Activated naive CD4-positive, alpha-beta T cell treated with anti-CD3 and anti-CD28 coated beads for 36 hours (primary cell): ENCODE measurements at regions of chr4 and their contacts with region 1.

Region 1: DNA sequence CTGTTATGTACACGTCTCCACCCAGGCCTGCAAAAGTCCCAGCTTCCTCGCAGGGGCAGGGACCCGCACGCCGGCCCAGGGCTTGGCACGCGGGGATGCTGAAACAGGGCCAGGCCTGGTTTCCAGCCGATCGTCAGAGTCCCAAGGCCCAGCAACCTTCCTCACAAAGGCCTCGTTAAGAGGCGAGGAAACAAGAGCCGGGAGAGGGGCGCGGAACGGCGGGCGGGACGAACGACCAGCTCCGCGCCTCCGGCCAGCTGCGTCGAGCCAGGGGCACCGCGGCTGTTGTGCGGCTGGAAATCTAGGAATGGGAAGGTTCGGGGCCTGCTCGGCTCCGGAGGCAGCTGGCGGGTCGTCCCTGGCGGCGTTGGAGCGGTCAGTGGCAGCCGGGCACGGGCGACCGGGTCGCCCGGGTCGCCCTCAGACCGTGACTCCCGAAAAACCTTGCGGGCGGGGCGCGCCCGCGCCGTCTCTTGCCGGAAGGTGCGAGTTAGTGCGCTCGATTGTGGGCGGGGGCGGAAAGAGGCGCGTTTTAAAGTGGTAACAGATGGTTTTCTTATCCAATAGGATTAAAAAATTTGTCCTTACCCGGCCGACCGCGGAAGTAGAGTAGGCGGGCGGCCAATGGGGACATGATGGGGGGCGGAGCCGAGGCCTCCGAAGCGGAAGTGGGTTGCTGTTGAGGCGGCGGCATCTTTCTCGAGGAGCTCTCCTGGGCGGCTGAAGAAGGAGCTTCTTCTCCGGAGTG is at the start of gene RNF4:
- DNase-seq: peak; percentile 98
- H3K4me3 Mint-ChIP-seq: peak within 1 kb of the TSS; percentile 97
- H3K27ac Mint-ChIP-seq: peak within 1 kb of the TSS; percentile 98
- H3K4me1 Mint-ChIP-seq: peaks cover 47% of the 10 kb centered on the region
- H3K27me3 Mint-ChIP-seq: no peaks in the 10 kb centered on the region
- total RNA-seq, gene RNF4: 69.2 to 73.1 TPM

Region 2: DNA sequence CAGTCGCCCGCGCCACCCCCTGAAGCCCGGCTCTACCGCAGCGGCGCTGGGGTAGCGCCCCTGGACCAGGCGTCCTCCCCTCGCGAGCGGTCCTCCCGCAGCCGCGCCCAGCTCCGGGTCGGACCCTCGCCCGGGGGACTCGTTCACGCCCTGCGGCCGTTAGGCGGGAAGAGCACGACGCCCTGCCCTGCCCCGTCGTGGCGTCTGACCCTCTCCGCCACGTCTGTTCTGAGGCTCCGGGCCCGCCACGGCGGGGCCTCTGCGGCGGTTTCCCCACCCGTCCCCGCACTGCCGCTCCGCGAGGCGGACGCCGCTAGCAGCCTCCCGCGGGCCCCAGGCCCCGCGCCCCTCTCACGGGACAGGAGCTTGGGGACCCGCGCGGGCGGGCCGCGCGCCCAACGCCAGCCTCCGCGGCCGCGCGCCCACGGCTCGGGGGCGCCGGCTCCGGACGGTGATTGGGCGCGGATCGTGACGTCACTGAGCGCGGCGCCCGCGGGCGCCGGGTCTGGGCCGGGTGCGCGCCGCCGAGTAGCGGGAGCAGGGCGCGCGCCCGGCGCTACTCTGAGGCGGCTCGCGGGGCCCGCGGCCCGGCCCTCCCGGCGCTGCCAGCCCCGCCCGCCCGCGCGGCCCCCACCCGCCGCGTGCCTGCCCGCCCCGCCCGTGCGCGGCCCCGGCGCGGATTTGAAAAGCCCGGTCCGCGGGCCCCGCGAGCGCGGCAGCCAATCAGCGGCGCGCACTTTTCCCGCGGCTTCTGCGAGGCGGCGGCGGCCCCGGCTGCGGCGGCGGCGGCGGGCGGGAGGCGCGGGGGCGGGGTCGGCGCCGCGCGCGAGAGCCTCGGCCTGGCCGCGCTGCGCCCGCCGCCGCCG is 597.8 kb before region 1 on chr4 and contains the start of gene NSD2:
- CTCF ChIA-PET with region 1: no interaction called
- intact Hi-C with region 1: loop called (anchors 5 kb)
- DNase-seq: peak; percentile 90
- H3K4me3 Mint-ChIP-seq: peak within 1 kb of the TSS; percentile 92
- H3K27ac Mint-ChIP-seq: peak within 1 kb of the TSS; percentile 96
- H3K4me1 Mint-ChIP-seq: peaks cover 35% of the 10 kb centered on the region
- H3K27me3 Mint-ChIP-seq: no peaks in the 10 kb centered on the region
- total RNA-seq, gene NSD2: 246 to 250 TPM

Region 3: DNA sequence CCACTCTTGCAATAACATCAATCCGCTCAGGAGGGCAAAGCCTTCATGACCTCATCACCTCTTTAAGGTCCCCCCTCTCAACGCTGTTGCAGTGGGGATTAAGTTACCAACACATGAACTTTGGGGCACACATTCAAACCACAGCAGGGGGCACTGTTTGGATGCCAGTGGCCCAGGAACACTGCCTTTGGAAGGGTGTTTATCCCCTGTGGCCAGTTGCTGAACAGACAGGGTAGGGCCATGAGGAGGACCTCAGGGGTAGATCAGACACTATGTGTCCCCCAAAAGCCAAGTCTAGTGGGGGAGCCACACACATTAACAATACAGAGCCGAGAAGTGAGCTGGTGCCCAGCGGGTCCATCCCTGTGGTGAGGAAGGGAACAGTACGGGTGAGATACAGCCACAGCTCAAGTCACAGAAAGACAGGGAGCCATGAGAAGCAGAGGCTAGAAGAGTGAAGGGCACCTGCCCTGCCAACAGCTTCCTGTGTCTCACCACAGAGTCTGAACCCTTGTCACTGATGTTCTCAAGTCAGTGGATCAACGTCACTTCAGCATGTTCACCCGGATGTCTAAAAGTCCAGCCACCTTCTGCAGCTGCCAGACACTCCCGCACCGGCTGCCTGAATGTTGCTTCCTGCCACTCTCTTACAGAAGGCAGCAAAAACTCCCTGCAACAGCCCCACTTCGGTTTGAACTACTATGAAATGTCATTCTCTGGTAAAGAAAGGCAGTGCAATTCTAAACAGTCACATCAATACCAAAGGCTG is 186.9 kb before region 1 on chr4:
- CTCF ChIA-PET with region 1: interaction called, 3 read pairs
- intact Hi-C with region 1: loop called (anchors 2 kb)
- DNase-seq: peak; percentile 94
- H3K4me3 Mint-ChIP-seq: peak overlapping the region; percentile 17
- H3K27ac Mint-ChIP-seq: peak overlapping the region; percentile 98
- H3K4me1 Mint-ChIP-seq: peaks cover 37% of the 10 kb centered on the region
- H3K27me3 Mint-ChIP-seq: no peaks in the 10 kb centered on the region

Region 4: GRCh38 chr4:2418650-2419571 is 49.7 kb before region 1 on chr4 and contains the start of gene CFAP99:
- CTCF ChIA-PET with region 1: no interaction called
- intact Hi-C with region 1: loop called (anchors 1 kb)
- DNase-seq: peak; percentile 97
- H3K4me3 Mint-ChIP-seq: peak within 1 kb of the TSS; percentile 81
- H3K27ac Mint-ChIP-seq: no peak within 1 kb of the TSS
- H3K4me1 Mint-ChIP-seq: peaks cover 38% of the 10 kb centered on the region
- H3K27me3 Mint-ChIP-seq: peaks cover 37% of the 10 kb centered on the region
- total RNA-seq, gene CFAP99: not detected

Region 5: DNA sequence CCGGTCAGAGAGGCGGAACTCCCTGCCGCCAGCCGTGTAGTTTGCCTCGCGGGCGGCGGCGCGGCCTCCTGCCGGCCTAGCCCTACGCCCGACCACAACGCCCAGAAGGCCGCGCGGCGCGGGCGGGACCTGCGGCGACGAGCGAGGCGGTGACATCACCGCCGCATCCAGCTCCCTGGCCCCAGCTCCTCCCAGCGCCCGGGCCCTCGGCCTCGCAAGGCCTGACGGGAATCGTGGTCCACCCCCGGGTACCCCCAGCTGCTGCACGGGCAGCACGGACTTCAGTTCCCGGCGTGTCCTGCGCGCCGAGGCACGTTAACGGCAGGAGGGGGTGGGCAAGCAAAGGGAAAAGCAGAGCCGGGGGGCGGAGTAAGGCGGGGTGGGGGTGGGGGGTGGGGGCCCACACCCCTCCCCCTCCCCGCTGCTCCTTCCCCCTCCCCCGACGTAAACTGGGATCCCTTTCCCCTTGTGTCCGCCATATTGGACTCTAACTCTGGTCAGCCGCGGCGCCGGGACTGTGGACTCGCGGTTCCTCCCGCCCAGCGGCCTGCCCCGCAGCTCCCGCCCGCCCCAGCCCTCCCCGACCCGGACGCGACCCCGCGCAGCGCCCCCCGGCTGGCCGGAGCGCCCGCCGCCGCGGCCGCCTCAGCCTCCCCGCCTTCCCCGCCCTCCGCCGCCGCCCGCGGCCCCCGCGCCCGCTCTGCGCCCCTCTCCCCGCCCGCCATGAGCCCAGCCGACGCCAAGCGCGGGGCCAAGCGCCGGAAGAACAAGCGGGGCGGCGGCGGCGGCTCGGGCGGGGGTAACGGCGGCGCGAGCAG is 67.8 kb after region 1 on chr4 and contains the start of gene FAM193A:
- CTCF ChIA-PET with region 1: no interaction called
- intact Hi-C with region 1: loop called (anchors 1 kb)
- DNase-seq: peak; percentile 99
- H3K4me3 Mint-ChIP-seq: peak within 1 kb of the TSS; percentile 86
- H3K27ac Mint-ChIP-seq: peak within 1 kb of the TSS; percentile 83
- H3K4me1 Mint-ChIP-seq: peaks cover 18% of the 10 kb centered on the region
- H3K27me3 Mint-ChIP-seq: no peaks in the 10 kb centered on the region
- total RNA-seq, gene FAM193A: 20.1 to 20.4 TPM

Region 6: DNA sequence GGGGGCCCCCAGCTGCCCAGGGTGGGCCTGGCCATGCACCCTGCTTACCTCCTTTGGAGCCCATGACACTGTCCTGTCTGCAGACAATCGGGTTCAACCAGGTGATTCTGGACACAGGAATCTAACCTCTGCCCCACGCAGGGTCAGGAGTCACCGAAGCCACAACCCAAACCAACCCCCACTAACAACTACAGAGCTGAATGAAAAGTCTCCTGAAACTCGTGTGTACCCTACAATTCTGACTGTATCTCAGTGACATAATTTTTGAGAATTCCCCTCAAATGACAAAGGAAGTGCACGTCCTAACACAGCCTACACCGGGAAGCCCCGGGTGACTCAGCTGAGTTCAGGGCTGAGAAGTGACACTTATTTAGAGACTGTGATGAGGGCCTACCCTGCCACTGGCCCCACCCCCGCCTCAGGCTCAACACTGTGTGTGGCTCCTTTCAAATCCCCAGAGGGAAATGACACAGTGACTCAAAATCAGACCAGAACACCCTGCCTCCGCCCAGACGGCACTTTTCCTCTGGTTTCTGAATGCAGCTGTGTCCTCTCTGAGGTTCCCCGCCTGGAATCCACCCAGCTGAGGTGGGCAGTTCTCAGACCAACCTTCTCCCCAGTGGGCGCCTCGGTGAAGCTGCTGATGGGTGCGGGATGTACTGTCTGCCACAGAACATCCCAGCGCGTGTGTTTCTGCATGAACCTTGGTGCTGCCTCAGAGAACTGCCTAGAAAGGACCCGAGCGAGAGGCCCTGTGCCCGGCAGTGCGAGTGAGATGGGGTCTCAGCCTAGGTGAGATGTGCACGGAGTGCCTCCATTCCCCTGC is 277.6 kb after region 1 on chr4:
- CTCF ChIA-PET with region 1: interaction called, 8 read pairs
- intact Hi-C with region 1: loop called (anchors 1 kb)
- DNase-seq: peak; percentile 99
- H3K4me3 Mint-ChIP-seq: peak overlapping the region; percentile 27
- H3K27ac Mint-ChIP-seq: peak overlapping the region; percentile 90
- H3K4me1 Mint-ChIP-seq: peaks cover 64% of the 10 kb centered on the region
- H3K27me3 Mint-ChIP-seq: no peaks in the 10 kb centered on the region

Region 7: GRCh38 chr4:3037957-3038461 is 569.4 kb after region 1 on chr4:
- CTCF ChIA-PET with region 1: no interaction called
- intact Hi-C with region 1: loop called (anchors 5 kb)
- DNase-seq: peak; percentile 45
- H3K4me3 Mint-ChIP-seq: peak overlapping the region; percentile 69
- H3K27ac Mint-ChIP-seq: no peak overlapping the region
- H3K4me1 Mint-ChIP-seq: peaks cover 37% of the 10 kb centered on the region
- H3K27me3 Mint-ChIP-seq: no peaks in the 10 kb centered on the region